ENCODE measurements at regions of chr11 and their contacts with region 1.

Region 1: DNA sequence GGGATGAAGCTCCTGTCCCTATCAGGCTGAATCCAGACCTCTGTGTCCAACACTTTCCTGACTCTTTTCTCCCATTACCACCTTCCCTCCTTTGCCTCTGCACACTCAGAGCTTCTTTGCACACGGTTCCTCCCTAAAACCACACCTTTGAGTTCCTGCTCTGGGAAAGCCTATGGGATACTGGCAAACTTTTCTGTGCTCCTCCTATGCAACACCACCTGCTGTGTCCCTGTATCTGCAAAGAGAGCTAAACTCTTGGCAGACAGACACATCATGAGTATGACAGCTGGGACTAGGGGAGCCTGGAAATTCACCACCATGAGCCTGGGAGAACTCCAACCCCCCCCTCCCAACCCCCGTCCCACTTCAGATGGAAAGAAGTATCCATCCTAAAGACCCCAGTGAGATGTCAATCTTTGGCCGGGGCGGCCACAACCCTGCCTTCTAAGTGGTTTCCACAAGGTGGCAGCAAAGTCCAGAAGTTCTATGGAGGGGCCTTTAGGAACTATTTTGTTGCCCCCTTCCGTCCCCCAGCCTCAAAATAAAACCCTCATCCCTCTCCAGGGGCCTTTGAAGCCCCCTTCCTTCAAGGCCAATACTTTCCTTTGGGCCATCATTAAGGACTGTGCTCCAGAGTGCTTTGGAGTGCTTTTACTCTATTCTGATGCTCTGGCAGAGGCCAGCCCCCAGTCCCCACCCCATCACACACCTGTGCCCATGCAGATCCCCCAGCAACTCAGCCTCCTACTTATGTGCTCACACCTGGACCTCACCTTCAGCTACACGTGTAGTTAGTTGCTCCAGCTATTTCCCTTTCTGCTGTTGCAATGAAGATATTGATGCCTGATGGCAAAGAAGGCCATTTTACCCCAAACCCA is 19.4 kb downstream of the HTR3A start:
- DNase-seq: peak; percentile 66
- ATAC-seq: peak; percentile 66
- H3K4me3 ChIP-seq: no peak overlapping the region
- H3K4me3 Mint-ChIP-seq: no peak overlapping the region
- H3K27ac ChIP-seq: no peak overlapping the region
- H3K27ac Mint-ChIP-seq: no peak overlapping the region
- H3K4me1 ChIP-seq: peaks cover 7 to 20% of the 10 kb centered on the region in 2 donors
- H3K4me1 Mint-ChIP-seq: peaks cover 9% of the 10 kb centered on the region
- H3K27me3 ChIP-seq: peaks cover 0 to 3% (median 0%) of the 10 kb centered on the region in 4 experiments
- H3K27me3 Mint-ChIP-seq: peaks cover 8% of the 10 kb centered on the region
- CTCF ChIP-seq: peak; percentile 79

Region 2: DNA sequence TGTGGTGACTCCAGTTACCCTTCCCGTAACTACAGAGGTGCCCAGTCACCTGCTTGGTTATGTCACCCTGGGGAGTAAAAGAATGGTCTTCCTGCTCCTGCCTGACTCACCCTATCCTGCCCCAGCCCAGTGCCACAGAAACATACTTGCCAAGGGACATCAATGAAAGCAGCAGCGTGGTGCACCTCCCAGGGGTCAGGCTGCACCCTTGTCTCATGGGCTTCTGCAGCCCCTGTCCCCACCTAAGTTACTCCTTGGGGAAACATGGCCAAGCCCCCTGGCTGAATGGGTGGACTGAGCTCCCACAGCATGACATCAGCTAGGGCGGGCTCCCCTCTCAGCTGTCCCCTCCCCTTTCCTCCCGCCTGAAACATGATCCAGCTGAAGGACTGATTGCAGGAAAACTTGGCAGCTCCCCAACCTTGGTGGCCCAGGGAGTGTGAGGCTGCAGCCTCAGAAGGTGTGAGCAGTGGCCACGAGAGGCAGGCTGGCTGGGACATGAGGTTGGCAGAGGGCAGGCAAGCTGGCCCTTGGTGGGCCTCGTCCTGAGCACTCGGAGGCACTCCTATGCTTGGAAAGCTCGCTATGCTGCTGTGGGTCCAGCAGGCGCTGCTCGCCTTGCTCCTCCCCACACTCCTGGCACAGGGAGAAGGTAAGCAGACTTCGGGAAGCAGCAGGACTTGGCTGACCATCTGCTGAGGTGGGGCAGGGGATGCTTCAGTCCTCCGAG is 19.4 kb before region 1 on chr11 and contains the start of gene HTR3A:
- CTCF ChIA-PET with region 1: interaction called, 97 read pairs
- POLR2A ChIA-PET with region 1: interaction called, 4 read pairs
- intact Hi-C with region 1: loop called (anchors 1 kb)
- DNase-seq: peak; percentile 16
- ATAC-seq: no peak
- H3K4me3 ChIP-seq: no peak within 1 kb of the TSS
- H3K4me3 Mint-ChIP-seq: peak within 1 kb of the TSS; percentile 48
- H3K27ac ChIP-seq: peak within 1 kb of the TSS in 1 of 2 donors; percentile 29
- H3K27ac Mint-ChIP-seq: peak within 1 kb of the TSS; percentile 91
- H3K4me1 ChIP-seq: peaks cover 56 to 77% of the 10 kb centered on the region in 2 donors
- H3K4me1 Mint-ChIP-seq: peaks cover 66% of the 10 kb centered on the region
- H3K27me3 ChIP-seq: no peaks in the 10 kb centered on the region
- H3K27me3 Mint-ChIP-seq: no peaks in the 10 kb centered on the region
- CTCF ChIP-seq: no peak
- total RNA-seq, gene HTR3A: 13.8 and 16.1 TPM in 2 replicates

Region 3: GRCh38 chr11:114036156-114036811 is 42.0 kb after region 1 on chr11:
- CTCF ChIA-PET with region 1: interaction called, 20 read pairs
- POLR2A ChIA-PET with region 1: no interaction called
- intact Hi-C with region 1: loop called (anchors 5 kb)
- DNase-seq: peak; percentile 72
- ATAC-seq: peak; percentile 93
- H3K4me3 ChIP-seq: peak overlapping the region in 3 of 5 experiments; percentile 18 to 48 (median 22)
- H3K4me3 Mint-ChIP-seq: no peak overlapping the region
- H3K27ac ChIP-seq: no peak overlapping the region
- H3K27ac Mint-ChIP-seq: no peak overlapping the region
- H3K4me1 ChIP-seq: peaks cover 0 to 12% of the 10 kb centered on the region in 2 donors
- H3K4me1 Mint-ChIP-seq: peaks cover 7% of the 10 kb centered on the region
- H3K27me3 ChIP-seq: peaks cover 0 to 17% (median 4%) of the 10 kb centered on the region in 4 experiments
- H3K27me3 Mint-ChIP-seq: peaks cover 28% of the 10 kb centered on the region
- CTCF ChIP-seq: peak; percentile 69

Region 4: DNA sequence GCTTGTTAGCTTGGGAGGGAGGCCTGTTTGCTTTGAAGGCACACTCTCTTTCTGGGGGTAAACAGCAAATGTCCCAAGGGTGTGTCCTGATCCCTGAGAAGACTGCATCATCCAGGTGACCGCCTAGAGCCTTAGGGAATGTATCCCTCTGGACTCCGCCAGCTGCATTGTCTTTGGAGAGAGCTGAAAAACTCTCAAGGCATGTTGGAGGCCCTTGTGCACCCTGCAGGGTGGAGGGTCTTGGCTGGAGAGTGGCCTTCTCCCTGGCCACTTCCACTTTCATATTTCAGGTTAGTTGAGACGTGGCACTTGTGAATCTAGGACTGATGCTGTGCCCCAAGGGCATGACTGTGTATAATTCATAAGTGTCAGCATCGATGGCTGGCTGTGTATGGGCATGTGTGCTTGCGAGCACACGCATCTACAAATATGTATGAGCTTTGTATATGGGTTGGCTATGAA is 135.8 kb after region 1 on chr11:
- CTCF ChIA-PET with region 1: no interaction called
- POLR2A ChIA-PET with region 1: no interaction called
- intact Hi-C with region 1: no loop called
- DNase-seq: no peak
- ATAC-seq: no peak
- H3K4me3 ChIP-seq: no peak overlapping the region
- H3K4me3 Mint-ChIP-seq: no peak overlapping the region
- H3K27ac ChIP-seq: no peak overlapping the region
- H3K27ac Mint-ChIP-seq: no peak overlapping the region
- H3K4me1 ChIP-seq: no peaks in the 10 kb centered on the region
- H3K4me1 Mint-ChIP-seq: peaks cover 4% of the 10 kb centered on the region
- H3K27me3 ChIP-seq: no peaks in the 10 kb centered on the region
- H3K27me3 Mint-ChIP-seq: peaks cover 19% of the 10 kb centered on the region
- CTCF ChIP-seq: no peak

Region 5: GRCh38 chr11:114180301-114181055 is 186.2 kb after region 1 on chr11:
- CTCF ChIA-PET with region 1: interaction called, 29 read pairs
- POLR2A ChIA-PET with region 1: no interaction called
- intact Hi-C with region 1: loop called (anchors 5 kb)
- DNase-seq: peak; percentile 59
- ATAC-seq: peak; percentile 59
- H3K4me3 ChIP-seq: no peak overlapping the region
- H3K4me3 Mint-ChIP-seq: peak overlapping the region; percentile 53
- H3K27ac ChIP-seq: peak overlapping the region; percentile 79 to 84
- H3K27ac Mint-ChIP-seq: peak overlapping the region; percentile 62
- H3K4me1 ChIP-seq: peaks cover 62 to 72% of the 10 kb centered on the region in 2 donors
- H3K4me1 Mint-ChIP-seq: peaks cover 69% of the 10 kb centered on the region
- H3K27me3 ChIP-seq: no peaks in the 10 kb centered on the region
- H3K27me3 Mint-ChIP-seq: peaks cover 2% of the 10 kb centered on the region
- CTCF ChIP-seq: peak; percentile 31

Region 6: GRCh38 chr11:114197799-114198500 is 203.6 kb after region 1 on chr11:
- CTCF ChIA-PET with region 1: interaction called, 10 read pairs
- POLR2A ChIA-PET with region 1: no interaction called
- intact Hi-C with region 1: no loop called
- DNase-seq: no peak
- ATAC-seq: no peak
- H3K4me3 ChIP-seq: no peak overlapping the region
- H3K4me3 Mint-ChIP-seq: no peak overlapping the region
- H3K27ac ChIP-seq: no peak overlapping the region
- H3K27ac Mint-ChIP-seq: peak overlapping the region; percentile 10
- H3K4me1 ChIP-seq: peaks cover 27 to 47% of the 10 kb centered on the region in 2 donors
- H3K4me1 Mint-ChIP-seq: peaks cover 39% of the 10 kb centered on the region
- H3K27me3 ChIP-seq: no peaks in the 10 kb centered on the region
- H3K27me3 Mint-ChIP-seq: no peaks in the 10 kb centered on the region
- CTCF ChIP-seq: no peak